ENCODE measurements at regions of chr9 and their contacts with region 1.

Region 1: DNA sequence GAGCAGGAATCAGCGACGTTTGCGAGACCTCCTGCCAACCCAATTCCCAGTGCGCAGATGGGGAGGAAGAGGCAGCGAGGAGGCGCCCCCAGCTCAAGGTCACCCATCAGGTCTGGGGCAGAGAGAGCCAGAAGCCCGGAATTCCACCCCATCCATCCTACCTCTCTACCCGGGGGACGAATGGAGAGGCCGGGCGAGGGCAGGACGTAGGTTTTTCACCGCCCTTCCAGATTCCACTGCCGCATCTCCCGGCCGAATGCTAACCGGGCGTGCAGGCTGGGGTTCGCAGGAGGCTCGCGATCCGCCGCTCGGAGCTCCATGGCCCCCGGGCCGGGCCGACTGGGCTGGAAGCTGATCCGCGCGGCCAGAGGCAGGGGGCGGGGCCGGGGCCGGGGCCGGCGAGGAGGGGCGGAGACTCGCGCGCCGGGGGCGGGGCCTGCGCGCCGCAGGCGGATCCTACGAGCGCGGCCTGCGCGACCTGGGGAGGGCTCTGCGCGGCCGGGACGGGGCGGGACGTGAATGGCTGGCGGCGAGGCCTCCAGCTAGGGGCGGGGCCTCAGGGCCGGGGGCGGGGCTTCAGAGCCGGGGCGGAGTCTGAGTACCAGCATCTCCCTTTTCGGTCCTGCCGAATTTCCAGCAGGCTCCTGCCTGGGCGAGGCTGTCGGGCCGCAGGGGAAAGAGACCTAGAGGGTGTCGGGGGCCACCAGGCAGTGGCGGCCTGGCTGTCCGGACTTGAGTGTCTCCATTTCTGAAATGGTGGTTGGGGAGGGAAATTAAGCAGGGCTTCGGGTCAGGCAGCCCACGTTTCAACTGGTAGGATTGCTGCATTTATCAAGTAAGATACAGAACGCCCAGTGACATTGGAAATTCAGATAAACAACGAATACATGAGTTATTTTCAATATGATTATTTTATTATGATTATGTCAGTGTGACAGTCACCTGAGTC is at the start of gene ST6GALNAC4:
- DNase-seq: peak; percentile 88 to 99 (median 94)

Region 2: DNA sequence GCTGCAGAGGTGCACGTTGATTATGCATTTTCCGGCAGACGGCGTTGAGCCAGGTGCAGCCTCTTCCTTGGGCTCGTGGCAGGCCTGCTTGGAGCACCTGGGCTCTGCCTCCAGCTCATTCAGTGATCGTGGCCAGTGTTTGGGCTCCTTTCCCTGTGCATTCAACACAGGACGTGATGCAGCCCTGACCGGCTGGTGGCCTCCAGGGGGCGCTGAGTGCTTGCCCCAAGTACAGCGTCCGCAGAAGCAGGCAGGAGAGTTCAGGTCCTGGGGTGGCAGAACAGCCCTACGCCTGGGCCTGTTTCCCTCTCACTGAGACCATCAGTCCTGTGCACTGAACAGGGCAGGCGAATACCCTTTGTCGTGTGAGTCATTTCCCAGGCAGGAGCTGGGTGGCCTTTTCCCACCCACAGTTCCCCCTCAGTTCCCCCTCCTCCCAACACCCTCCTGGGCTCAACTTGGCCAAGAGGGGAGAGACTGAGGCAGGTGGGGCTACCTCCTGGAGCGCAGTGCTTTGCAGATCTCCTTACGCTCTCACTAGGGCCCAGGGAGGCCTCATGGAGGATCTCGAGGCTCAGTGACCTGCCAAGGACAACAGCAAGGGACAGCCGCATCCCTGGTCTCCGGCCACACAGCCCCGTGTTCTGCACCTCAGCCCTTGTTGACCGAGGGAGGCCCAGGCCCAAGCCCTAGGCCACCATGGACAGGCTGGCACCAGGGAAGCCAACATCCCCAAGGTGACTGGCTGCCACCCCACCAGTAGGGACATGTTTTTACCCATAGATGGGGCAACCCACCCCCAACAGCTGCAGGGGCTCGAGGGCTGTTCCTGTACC is 412.8 kb before region 1 on chr9:
- intact Hi-C with region 1: loop called (anchors 10 kb)
- DNase-seq: peak; percentile 63 to 96 (median 82)

Region 3: GRCh38 chr9:127586537-127586936 is 330.4 kb before region 1 on chr9:
- intact Hi-C with region 1: loop called (anchors 2 kb)
- DNase-seq: peak in 9 of 10 donors; percentile 56 to 95 (median 80)

Region 4: DNA sequence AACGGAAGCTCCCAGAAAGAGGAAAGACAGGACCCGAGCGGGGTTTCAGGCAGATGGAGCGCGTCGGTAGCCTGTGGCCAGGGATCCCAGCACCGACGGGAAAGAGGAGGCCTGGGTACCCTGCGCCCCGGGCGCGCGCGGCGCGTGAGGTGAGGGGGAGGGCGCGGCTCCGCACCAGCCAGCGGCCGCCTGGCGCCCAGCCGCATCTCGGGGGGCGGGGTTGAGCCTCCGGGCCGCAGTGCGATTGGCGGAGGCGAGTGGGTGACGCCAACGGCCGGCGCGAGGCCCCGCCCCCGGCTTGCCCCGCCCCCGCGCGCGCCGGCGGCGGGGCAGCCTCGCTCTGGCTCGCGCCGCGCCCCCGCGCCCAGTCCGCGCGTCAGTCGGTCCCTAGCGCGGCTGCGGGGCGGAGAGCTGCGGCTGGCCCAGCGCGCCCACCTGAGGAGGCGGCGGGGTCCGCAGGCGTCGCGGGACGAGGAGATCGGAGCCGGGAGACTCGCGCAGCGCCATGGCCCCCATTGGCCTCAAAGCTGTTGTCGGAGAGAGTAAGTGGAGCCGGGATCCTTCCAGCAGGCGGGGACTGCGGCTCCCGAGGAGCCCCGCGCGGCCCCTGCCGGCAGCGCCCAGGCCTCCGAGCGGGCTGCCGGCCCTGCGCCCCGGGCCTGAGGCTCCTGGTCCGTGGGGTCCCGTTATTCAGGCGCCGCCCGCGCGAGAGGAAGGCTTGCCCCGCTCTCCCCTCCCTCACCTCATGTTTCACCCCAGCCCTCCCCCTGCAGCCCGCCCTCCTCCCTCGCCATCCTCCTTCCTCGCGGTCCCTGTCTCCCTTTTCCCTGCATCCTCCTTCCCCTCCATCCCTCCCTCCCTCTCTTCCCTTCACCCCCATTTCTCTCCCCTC is 304.8 kb before region 1 on chr9 and contains the start of gene STXBP1:
- intact Hi-C with region 1: loop called (anchors 5 kb)
- DNase-seq: peak; percentile 86 to 99 (median 90)

Region 5: DNA sequence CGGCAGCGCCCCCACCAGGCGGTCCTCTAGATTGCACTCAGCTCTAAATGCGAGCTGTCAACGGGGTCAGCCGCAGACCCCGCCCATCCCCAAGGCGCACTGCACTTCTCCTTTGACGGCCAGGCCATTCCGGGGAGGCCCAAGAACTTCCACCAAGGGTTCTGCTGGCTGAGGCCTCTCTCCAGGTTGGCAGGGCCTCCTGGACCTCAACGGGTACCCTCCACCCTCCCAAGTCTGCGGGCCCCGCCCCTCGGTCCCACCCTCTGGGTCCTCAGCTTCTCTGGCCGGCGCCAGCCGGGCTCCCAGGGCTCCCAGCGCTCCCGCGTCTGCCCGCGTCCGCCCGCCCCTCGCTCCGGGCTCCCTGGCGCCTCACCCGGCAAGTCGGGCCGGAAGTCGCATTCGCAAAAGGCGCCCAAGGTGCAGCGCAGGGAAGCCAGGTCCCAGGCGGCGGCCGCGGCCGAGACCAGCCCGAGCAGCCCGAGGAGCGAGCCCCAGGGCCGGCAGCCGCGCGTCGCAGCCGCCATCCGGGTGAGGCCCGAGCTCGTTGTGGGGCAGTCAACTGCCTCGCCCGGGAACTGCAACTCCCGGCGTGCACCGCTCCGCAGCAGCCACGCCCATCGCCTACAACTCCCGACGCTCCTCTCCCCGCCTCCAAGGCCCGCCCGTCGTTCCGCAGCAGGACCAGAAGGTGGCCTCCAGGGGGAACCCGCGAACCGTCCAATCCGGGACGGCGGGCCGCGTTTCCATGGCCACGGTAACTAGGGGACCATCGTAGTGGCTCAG is 182.0 kb before region 1 on chr9 and contains the start of gene TOR2A:
- intact Hi-C with region 1: loop called (anchors 5 kb)
- DNase-seq: peak; percentile 96 to 100 (median 98)

Region 6: DNA sequence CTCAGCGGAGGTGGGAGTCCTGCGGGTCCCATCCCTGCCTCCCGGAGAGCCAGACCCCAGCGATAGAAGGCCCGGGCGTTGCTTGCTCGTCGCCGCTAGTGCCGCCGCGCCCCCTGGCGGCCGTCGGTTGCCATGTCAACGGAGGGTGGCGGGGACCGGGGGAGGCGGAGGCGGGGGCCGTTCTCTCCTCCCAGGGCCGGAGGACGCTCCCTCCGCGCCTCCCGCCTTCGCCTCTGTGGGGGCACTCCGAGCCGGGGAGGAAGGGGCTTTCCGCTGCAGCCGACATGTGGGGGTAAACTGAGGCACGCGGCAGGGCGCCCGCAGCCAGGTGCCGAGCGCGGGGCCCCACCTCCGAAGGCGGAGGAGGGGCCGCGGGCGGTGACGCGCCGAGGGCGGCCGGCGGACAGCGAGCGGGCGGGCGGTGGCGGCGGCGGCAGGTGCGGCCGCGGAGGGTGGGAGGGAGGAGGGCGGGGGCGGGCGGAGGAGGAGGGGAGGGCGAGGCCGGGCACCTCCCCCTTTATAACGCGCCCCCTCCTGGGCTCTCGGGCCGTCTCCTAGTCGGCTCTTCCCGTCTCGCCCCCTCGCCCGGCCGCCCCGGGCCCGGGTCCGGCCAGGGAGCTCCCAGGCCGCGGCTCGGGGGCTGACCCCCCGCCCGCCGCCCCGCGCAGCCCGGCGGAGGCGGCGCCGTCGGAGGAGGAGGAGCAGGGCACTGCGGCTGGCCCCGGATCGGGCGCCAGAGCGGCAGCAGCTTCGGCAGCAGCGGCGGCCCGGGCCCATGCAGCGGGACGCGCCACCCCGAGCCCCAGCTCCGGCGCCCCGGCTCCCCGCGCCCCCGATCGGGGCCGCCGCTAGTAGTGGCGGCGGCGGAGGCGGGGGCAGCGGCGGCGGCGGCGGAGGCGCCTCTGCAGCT is 131.7 kb before region 1 on chr9:
- intact Hi-C with region 1: loop called (anchors 5 kb)
- DNase-seq: peak; percentile 77 to 97 (median 86)

Region 7: GRCh38 chr9:127802576-127803443 is 114.1 kb before region 1 on chr9 and contains the start of gene FPGS:
- intact Hi-C with region 1: loop called (anchors 5 kb)
- DNase-seq: peak; percentile 77 to 97 (median 84)